ENCODE measurements at regions of chr9 and their contacts with region 1.

Region 1: GRCh38 chr9:34646211-34647083 is at the start of gene GALT:
- DNase-seq: no peak
- ATAC-seq: peak; percentile 95
- H3K4me3 ChIP-seq: peak within 1 kb of the TSS; percentile 74
- H3K27ac ChIP-seq: peak within 1 kb of the TSS; percentile 78
- H3K4me1 ChIP-seq: peaks cover 14% of the 10 kb centered on the region
- H3K27me3 ChIP-seq: no peaks in the 10 kb centered on the region
- CTCF ChIP-seq: peak; percentile 54 to 62 (median 56)
- EP300 ChIP-seq: no peak
- POLR2A ChIP-seq: peak; percentile 87
- RAD21 ChIP-seq: no peak
- polyA plus RNA-seq, gene GALT: 22.8 to 24.9 TPM

Region 2: GRCh38 chr9:34374905-34375552 is 271.4 kb before region 1 on chr9:
- CTCF ChIA-PET with region 1: no interaction called
- POLR2A ChIA-PET with region 1: no interaction called
- RAD21 ChIA-PET with region 1: no interaction called
- SMC1A ChIA-PET with region 1: no interaction called
- in situ Hi-C with region 1: no loop called
- intact Hi-C with region 1: no loop called
- DNase-seq: no peak
- ATAC-seq: no peak
- H3K4me3 ChIP-seq: no peak overlapping the region
- H3K27ac ChIP-seq: no peak overlapping the region
- H3K4me1 ChIP-seq: peaks cover 12% of the 10 kb centered on the region
- H3K27me3 ChIP-seq: no peaks in the 10 kb centered on the region
- CTCF ChIP-seq: no peak
- EP300 ChIP-seq: no peak
- POLR2A ChIP-seq: no peak
- RAD21 ChIP-seq: no peak

Region 3: GRCh38 chr9:34591248-34591916 is 55.1 kb before region 1 on chr9:
- CTCF ChIA-PET with region 1: interaction called, 3 read pairs
- POLR2A ChIA-PET with region 1: no interaction called
- RAD21 ChIA-PET with region 1: no interaction called
- SMC1A ChIA-PET with region 1: no interaction called
- in situ Hi-C with region 1: loop called (anchors 5 kb)
- intact Hi-C with region 1: no loop called
- DNase-seq: no peak
- ATAC-seq: peak; percentile 97
- H3K4me3 ChIP-seq: no peak overlapping the region
- H3K27ac ChIP-seq: no peak overlapping the region
- H3K4me1 ChIP-seq: peaks cover 2% of the 10 kb centered on the region; the same call in 1 of the 2 replicates
- H3K27me3 ChIP-seq: peaks cover 28 to 50% of the 10 kb centered on the region in 2 experiments
- CTCF ChIP-seq: peak; percentile 75 to 94 (median 87)
- EP300 ChIP-seq: no peak
- POLR2A ChIP-seq: no peak
- RAD21 ChIP-seq: peak; percentile 66

Region 4: DNA sequence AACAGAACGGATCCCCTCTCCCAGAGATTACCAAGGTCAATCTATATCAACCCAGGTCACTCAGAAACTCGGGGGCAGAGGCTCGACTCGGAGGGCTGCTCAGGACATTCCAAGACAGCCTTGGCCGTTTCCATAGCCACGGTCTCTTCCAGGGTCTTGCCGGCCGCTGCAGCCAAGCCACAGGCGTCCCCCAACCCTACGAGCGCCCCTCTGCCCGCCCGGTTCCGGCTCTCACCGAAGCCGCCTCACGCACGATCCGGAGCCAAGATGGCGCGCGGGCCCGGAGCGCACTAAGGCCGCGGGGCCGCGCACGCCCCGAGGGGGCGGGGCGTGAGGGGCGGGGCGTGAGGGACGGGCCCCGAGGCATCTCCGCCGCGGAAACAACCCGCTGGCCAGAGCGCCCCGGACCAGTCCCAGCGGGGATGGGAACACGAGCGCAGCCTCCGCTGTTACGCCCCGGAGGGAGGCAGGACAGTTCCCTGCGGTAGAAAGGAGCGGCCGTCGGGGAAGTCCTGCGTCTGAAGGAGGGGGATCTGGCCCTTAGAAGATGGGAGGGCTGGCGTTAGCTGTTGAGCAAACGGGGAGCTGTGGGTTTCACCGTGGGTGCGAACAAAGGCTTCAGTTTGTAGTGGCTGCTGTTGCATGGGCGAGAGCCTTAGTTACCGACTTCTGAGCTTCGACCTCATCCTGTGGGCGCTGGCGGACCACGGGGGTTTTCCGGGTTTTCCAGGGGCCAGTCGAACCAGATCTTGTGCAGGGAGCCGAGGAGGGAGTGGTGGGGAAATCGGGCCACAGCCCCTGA is 34.4 kb before region 1 on chr9 and contains the start of gene RPP25L:
- CTCF ChIA-PET with region 1: interaction called, 10 read pairs
- POLR2A ChIA-PET with region 1: no interaction called
- RAD21 ChIA-PET with region 1: interaction called, 5 read pairs
- SMC1A ChIA-PET with region 1: no interaction called
- in situ Hi-C with region 1: no loop called
- intact Hi-C with region 1: no loop called
- DNase-seq: no peak
- ATAC-seq: peak; percentile 98
- H3K4me3 ChIP-seq: peak within 1 kb of the TSS; percentile 81
- H3K27ac ChIP-seq: peak within 1 kb of the TSS; percentile 85
- H3K4me1 ChIP-seq: peaks cover 6% of the 10 kb centered on the region; the same call in 1 of the 2 replicates
- H3K27me3 ChIP-seq: no peaks in the 10 kb centered on the region
- CTCF ChIP-seq: no peak
- EP300 ChIP-seq: no peak
- POLR2A ChIP-seq: peak; percentile 99
- RAD21 ChIP-seq: no peak
- polyA plus RNA-seq, gene RPP25L: 7.7 to 14.7 TPM

Region 5: GRCh38 chr9:34665381-34666250 is 19.2 kb after region 1 on chr9:
- CTCF ChIA-PET with region 1: interaction called, 23 read pairs
- POLR2A ChIA-PET with region 1: interaction called, 3 read pairs
- RAD21 ChIA-PET with region 1: no interaction called
- SMC1A ChIA-PET with region 1: interaction called, 3 read pairs
- in situ Hi-C with region 1: no loop called
- intact Hi-C with region 1: no loop called
- DNase-seq: no peak
- ATAC-seq: peak; percentile 92
- H3K4me3 ChIP-seq: peak overlapping the region; percentile 97
- H3K27ac ChIP-seq: peak overlapping the region; percentile 47
- H3K4me1 ChIP-seq: peaks cover 9% of the 10 kb centered on the region
- H3K27me3 ChIP-seq: no peaks in the 10 kb centered on the region
- CTCF ChIP-seq: no peak
- EP300 ChIP-seq: no peak
- POLR2A ChIP-seq: peak; percentile 54; the same call in 1 of the 2 replicates
- RAD21 ChIP-seq: no peak

Region 6: GRCh38 chr9:34701769-34702736 is 55.6 kb after region 1 on chr9:
- CTCF ChIA-PET with region 1: interaction called, 14 read pairs
- POLR2A ChIA-PET with region 1: no interaction called
- RAD21 ChIA-PET with region 1: no interaction called
- SMC1A ChIA-PET with region 1: no interaction called
- in situ Hi-C with region 1: no loop called
- intact Hi-C with region 1: no loop called
- DNase-seq: no peak
- ATAC-seq: peak; percentile 96
- H3K4me3 ChIP-seq: no peak overlapping the region
- H3K27ac ChIP-seq: no peak overlapping the region
- H3K4me1 ChIP-seq: no peaks in the 10 kb centered on the region
- H3K27me3 ChIP-seq: peaks cover 0 to 15% of the 10 kb centered on the region in 2 experiments; a peak in 3 of 4 replicates
- CTCF ChIP-seq: peak; percentile 94 to 98 (median 98)
- EP300 ChIP-seq: no peak
- POLR2A ChIP-seq: no peak
- RAD21 ChIP-seq: peak; percentile 87